Left ventricle myocardium inferior (tissue), 1 donor: ENCODE measurements at regions of chr16 and their contacts with region 1.

Region 1: DNA sequence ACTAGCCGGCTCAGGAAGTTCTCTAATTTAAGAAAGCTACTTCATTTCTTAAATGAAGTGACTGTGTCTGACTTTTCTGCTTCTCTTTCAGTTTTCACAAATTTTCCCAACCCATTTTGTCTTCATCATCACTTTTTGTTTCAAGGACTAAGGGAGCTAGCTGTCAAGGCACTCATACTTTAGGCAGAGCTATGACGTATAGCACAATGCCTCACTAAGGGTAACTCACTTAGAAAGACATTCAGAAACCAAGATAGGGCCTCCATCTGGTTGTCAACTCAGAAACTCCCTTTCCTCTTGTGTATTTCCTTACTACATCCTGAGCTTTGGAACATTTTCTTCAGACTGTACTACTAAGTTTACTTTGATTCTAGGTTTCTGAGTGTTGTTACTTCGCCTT is 397.9 kb downstream of the TOX3 start:
- DNase-seq: no peak
- H3K4me3 ChIP-seq: no peak overlapping the region
- H3K27ac ChIP-seq: peak overlapping the region; percentile 33
- H3K4me1 ChIP-seq: no peaks in the 10 kb centered on the region
- H3K27me3 ChIP-seq: no peaks in the 10 kb centered on the region
- CTCF ChIP-seq: no peak

Region 2: GRCh38 chr16:52209227-52209626 is 60.2 kb after region 1 on chr16:
- intact Hi-C with region 1: loop called (anchors 2 kb)
- DNase-seq: no peak
- H3K4me3 ChIP-seq: no peak overlapping the region
- H3K27ac ChIP-seq: no peak overlapping the region
- H3K4me1 ChIP-seq: no peaks in the 10 kb centered on the region
- H3K27me3 ChIP-seq: no peaks in the 10 kb centered on the region
- CTCF ChIP-seq: no peak